RWPE1 (cell line): ENCODE measurements at regions of chr7 and their contacts with region 1.

Region 1: GRCh38 chr7:5423844-5424688 is 432 bp upstream of the TNRC18 start:
- DNase-seq: peak; percentile 96
- H3K27ac ChIP-seq: peak overlapping the region; percentile 100
- CTCF ChIP-seq: no peak

Region 2: DNA sequence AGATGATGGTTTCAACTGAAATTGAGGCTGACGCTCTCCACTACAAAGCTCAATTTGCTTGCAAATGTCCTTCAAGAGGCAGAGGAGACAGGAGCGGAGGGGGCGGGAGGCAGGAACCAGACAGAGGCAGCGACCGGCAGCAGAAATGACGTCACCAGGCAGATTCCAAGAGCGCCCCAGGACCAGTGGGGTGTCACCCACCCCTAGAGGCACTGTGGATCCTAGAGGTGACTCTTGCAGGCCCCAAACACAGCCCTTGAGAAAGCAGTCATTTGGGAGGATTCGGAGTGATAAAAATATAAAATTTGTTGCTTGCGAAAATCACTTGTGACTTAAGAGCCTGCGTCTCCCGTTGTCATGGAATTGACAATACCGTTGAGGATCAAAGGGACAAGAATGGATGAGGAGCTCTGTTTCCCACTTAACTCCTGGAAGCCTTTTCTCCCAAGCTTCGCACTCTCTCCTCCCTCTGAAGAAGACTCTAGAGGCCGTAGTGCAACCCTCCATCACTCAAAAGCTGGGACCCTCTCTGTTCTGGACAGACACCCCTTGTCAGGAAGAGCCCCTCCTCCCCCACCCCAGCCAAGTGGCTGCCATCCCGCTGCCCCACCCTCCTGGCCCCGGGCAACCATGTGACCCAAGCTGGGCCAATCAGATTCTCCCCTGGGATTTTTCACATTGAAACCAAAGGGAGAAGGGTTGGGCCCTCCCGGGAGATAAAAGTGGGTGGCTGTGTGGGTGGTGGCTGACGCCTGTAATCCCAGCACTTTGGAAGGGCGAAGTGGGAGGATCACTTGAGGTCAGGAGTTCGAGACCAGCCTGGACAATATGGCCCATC is 157.7 kb before region 1 on chr7:
- CTCF ChIA-PET with region 1: no interaction called
- POLR2A ChIA-PET with region 1: no interaction called
- DNase-seq: no peak
- H3K27ac ChIP-seq: no peak overlapping the region
- CTCF ChIP-seq: no peak

Region 3: GRCh38 chr7:5396999-5397663 is 26.9 kb before region 1 on chr7:
- CTCF ChIA-PET with region 1: interaction called, 17 read pairs
- POLR2A ChIA-PET with region 1: interaction called, 15 read pairs
- DNase-seq: peak; percentile 99
- H3K27ac ChIP-seq: peak overlapping the region; percentile 94
- CTCF ChIP-seq: no peak